ENCODE measurements at regions of chr3 and their contacts with region 1.

Region 1: DNA sequence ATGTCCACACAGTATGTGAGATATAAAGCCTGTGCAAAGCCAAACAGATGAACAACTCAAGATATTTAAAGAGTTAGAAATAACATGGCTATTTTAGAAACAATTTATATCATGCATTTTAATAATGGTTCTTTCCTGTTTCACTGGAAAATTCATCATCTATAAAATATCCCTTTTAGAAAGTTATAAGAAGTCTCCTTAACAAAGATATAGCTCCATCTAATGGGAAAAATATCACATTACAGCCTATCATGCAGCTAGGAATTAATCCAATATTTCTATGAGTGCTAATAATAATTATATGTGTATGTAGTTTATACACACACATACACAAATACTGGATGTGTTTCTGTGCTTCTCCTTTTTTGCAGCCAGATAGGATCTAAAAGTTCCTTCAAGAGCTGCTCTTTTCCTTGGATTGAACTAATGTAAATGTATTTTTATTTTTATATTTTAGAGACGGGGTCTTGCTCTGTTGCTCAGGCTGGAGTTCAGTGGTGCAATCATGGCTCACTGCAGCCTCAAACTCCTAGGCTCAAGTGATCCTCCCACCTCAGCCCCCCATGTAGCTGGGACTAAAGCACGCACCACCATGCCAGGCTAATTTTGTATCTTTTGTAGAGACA is 21.6 kb downstream of the RPL22L1 start:
- DNase-seq: no peak
- H3K4me3 Mint-ChIP-seq: no peak overlapping the region
- H3K27ac Mint-ChIP-seq: no peak overlapping the region
- H3K4me1 Mint-ChIP-seq: no peaks in the 10 kb centered on the region
- H3K27me3 Mint-ChIP-seq: no peaks in the 10 kb centered on the region
- CTCF ChIP-seq: peak; percentile 53

Region 2: DNA sequence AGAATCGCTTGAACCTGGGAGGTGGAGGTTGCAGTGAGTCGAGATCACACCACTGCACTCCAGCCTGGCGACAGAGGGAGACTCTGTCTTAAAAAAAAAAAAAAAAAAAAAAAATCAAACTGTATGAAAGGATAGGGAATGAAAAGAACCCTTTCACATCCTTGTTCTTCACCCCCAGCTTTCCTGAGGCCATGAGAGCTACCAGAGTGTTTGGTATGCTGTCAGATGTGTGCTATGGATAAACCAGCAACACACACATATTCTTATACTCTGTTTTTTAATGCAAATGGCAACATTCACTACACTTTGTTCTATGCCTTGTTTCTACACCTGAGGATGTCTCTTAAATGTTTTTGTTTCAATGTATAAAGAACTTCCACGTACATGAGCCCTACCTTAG is 11.9 kb before region 1 on chr3:
- CTCF ChIA-PET with region 1: interaction called, 13 read pairs
- intact Hi-C with region 1: no loop called
- DNase-seq: no peak
- H3K4me3 Mint-ChIP-seq: no peak overlapping the region
- H3K27ac Mint-ChIP-seq: no peak overlapping the region
- H3K4me1 Mint-ChIP-seq: no peaks in the 10 kb centered on the region
- H3K27me3 Mint-ChIP-seq: peaks cover 36% of the 10 kb centered on the region
- CTCF ChIP-seq: no peak

Region 3: GRCh38 chr3:170862618-170863374 is 14.4 kb after region 1 on chr3:
- CTCF ChIA-PET with region 1: interaction called, 11 read pairs
- intact Hi-C with region 1: no loop called
- DNase-seq: no peak
- H3K4me3 Mint-ChIP-seq: no peak overlapping the region
- H3K27ac Mint-ChIP-seq: no peak overlapping the region
- H3K4me1 Mint-ChIP-seq: peaks cover 50% of the 10 kb centered on the region
- H3K27me3 Mint-ChIP-seq: no peaks in the 10 kb centered on the region
- CTCF ChIP-seq: no peak

Measured in Calu3 (cell line).